CD8-positive, alpha-beta T cell (primary cell): ENCODE measurements at regions of chr2 and their contacts with region 1.

Region 1: DNA sequence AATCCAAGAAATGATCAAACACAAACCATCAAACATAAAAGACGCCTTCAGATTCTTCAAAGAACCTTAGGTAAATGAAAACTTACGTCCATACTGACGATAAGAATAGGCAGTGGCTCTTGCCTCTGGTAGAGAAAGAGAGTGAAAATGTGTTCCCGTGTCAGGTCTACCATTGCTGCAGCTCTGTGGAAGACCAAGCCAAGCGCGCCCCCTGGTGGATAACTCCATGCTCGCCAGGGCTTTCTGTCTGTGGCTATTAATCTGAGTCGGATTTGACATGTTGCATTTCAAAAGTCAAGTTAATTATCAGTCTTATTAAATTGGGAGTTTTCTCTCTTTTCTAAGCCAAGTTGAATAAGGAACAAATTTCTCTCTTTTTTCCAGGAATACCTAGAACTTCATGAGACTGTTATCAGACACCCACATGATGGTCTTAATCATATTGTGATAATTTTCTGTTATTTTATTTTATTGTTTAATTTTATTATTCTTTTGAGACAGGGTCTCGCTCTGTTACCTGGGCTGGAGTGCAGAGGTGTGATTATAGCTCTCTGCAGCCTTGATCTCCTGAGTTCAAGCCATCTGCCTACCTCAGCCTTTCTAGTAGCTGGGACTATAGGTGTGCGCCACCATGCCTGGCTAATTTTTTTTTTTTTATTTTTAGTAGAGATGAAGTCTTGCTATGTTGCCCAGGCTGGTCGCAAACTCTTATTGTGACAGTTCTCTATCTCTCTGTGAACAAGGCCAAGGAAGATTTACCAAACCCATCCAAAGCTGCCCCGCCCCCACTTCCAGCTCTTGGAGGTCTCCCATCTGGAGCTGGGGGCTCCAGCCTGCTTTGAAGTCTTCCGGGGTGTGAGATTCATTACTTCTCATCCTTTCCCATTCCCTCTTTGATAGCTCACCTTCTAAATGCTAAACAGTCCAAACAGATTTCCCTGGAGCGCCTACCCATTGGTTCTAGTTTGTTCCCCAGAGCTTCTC is 15.8 kb upstream of the ZAP70 start:
- DNase-seq: peak; percentile 86 to 98 (median 90)
- ATAC-seq: peak; percentile 92
- H3K4me3 ChIP-seq: no peak overlapping the region
- H3K4me3 Mint-ChIP-seq: peak overlapping the region; percentile 9
- H3K27ac ChIP-seq: no peak overlapping the region
- H3K27ac Mint-ChIP-seq: no peak overlapping the region
- H3K4me1 ChIP-seq: no peaks in the 10 kb centered on the region
- H3K4me1 Mint-ChIP-seq: peaks cover 7% of the 10 kb centered on the region
- H3K27me3 ChIP-seq: no peaks in the 10 kb centered on the region
- H3K27me3 Mint-ChIP-seq: no peaks in the 10 kb centered on the region
- CTCF ChIP-seq: peak; percentile 85

Region 2: DNA sequence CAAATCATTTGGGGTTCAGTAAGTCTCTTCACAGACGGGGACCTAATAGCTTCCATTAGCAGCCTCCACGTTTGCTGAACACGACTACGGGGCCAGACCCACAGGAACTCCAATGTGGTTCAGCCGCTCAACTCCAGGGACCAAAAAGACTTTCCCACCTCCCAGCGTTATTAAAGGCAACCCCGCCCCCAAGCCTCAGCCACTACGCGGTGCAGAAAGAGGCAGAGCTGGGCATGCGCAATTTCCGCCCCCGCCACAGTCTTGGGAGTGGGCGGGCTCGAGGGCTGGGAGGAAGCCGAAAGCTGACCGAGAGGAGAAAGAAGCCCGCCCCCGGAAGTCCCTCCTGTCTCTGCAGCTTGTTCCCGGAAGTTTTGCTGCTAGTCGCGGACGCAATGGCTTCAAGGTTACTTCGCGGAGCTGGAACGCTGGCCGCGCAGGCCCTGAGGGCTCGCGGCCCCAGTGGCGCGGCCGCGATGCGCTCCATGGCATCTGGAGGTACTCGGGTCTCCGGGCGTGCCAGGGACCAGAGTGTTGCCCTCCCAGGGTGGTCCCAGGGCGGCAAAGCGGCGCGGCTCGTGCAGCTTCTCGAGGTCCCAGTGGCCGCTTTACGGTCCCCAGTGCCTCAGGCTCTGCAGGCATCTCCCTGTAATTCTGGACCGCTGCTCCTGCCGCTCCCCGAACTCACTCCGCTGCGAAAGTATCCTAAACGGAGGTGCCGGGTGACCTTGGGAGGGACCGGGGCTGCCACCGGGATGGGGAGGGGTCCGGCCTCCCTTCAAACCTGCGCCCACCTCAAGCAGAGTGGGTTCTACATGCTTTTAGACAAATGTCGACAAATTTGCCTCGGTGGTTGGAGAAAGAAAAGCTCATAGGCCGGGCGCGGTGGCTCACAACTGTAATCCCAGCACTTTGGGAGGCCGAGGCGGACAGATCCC is 51.6 kb before region 1 on chr2 and contains the start of gene COX5B:
- CTCF ChIA-PET with region 1: interaction called, 8 read pairs
- POLR2A ChIA-PET with region 1: interaction called, 12 read pairs
- intact Hi-C with region 1: loop called (anchors 2 to 5 kb)
- DNase-seq: peak; percentile 97 to 99 (median 99)
- ATAC-seq: peak; percentile 97
- H3K4me3 ChIP-seq: peak within 1 kb of the TSS; percentile 94 to 97
- H3K4me3 Mint-ChIP-seq: peak within 1 kb of the TSS; percentile 91
- H3K27ac ChIP-seq: peak within 1 kb of the TSS; percentile 83 to 90
- H3K27ac Mint-ChIP-seq: peak within 1 kb of the TSS; percentile 95
- H3K4me1 ChIP-seq: peaks cover 20% of the 10 kb centered on the region
- H3K4me1 Mint-ChIP-seq: peaks cover 20% of the 10 kb centered on the region
- H3K27me3 ChIP-seq: no peaks in the 10 kb centered on the region
- H3K27me3 Mint-ChIP-seq: no peaks in the 10 kb centered on the region
- CTCF ChIP-seq: no peak
- total RNA-seq, gene COX5B: 115 to 117 TPM

Region 3: GRCh38 chr2:97675430-97676113 is 22.0 kb before region 1 on chr2:
- CTCF ChIA-PET with region 1: interaction called, 14 read pairs
- POLR2A ChIA-PET with region 1: interaction called, 4 read pairs
- intact Hi-C with region 1: no loop called
- DNase-seq: no peak
- ATAC-seq: no peak
- H3K4me3 ChIP-seq: no peak overlapping the region
- H3K4me3 Mint-ChIP-seq: no peak overlapping the region
- H3K27ac ChIP-seq: no peak overlapping the region
- H3K27ac Mint-ChIP-seq: no peak overlapping the region
- H3K4me1 ChIP-seq: no peaks in the 10 kb centered on the region
- H3K4me1 Mint-ChIP-seq: no peaks in the 10 kb centered on the region
- H3K27me3 ChIP-seq: no peaks in the 10 kb centered on the region
- H3K27me3 Mint-ChIP-seq: peaks cover 14% of the 10 kb centered on the region
- CTCF ChIP-seq: no peak

Region 4: DNA sequence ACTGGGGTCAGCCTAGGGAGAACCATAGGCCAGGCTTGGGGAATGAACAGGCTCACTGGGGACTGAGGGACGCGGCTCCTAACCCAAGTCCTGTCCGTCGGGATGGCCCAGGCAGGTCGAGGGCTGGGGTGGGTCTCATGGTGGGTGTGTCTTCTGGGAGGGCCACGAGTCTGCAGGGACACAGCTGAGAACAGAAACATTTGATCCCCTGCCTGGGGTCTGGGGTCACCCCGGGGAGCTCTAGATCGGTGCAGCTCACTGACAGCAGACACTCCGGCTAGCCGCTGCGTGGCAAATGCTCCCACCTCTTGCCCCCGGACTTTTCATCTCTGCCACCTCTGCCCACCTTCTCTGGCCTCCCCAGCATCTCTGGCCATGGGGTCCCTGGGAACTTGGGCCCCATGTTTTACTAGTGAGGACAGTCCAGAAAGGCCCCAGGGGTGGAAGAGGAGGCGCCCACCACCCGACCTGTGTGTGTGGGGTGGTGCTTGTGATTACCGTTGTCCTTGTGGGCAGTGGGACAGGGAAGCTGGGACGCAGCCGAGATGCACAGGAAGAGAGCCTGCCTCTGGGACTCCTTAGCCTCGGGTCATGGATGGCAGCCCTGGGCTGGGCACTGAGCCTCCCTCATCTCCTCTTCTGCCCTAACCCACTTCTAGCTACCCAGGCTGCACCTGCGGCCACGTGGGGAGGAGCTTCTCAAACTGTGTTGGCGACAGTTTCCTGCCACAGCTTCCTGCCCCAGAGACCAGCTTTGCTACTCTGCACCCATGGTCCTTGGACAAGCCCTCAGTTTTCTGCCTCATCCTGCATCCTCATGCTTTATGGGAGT is 20.7 kb after region 1 on chr2:
- CTCF ChIA-PET with region 1: interaction called, 185 read pairs
- POLR2A ChIA-PET with region 1: interaction called, 4 read pairs
- intact Hi-C with region 1: no loop called
- DNase-seq: peak; percentile 58 to 90 (median 80)
- ATAC-seq: peak; percentile 76
- H3K4me3 ChIP-seq: peak overlapping the region; percentile 68 to 91
- H3K4me3 Mint-ChIP-seq: peak overlapping the region; percentile 96
- H3K27ac ChIP-seq: peak overlapping the region; percentile 80 to 88
- H3K27ac Mint-ChIP-seq: peak overlapping the region; percentile 97
- H3K4me1 ChIP-seq: peaks cover 80% of the 10 kb centered on the region
- H3K4me1 Mint-ChIP-seq: peaks cover 85% of the 10 kb centered on the region
- H3K27me3 ChIP-seq: no peaks in the 10 kb centered on the region
- H3K27me3 Mint-ChIP-seq: no peaks in the 10 kb centered on the region
- CTCF ChIP-seq: no peak

Region 5: GRCh38 chr2:97740590-97741182 is 43.1 kb after region 1 on chr2:
- CTCF ChIA-PET with region 1: interaction called, 181 read pairs
- POLR2A ChIA-PET with region 1: interaction called, 4 read pairs
- intact Hi-C with region 1: no loop called
- DNase-seq: peak in 4 of 9 experiments; percentile 37 to 70 (median 54)
- ATAC-seq: peak; percentile 55
- H3K4me3 ChIP-seq: no peak overlapping the region
- H3K4me3 Mint-ChIP-seq: no peak overlapping the region
- H3K27ac ChIP-seq: peak overlapping the region in 1 of 2 experiments; percentile 68
- H3K27ac Mint-ChIP-seq: peak overlapping the region; percentile 77
- H3K4me1 ChIP-seq: peaks cover 36% of the 10 kb centered on the region
- H3K4me1 Mint-ChIP-seq: peaks cover 59% of the 10 kb centered on the region
- H3K27me3 ChIP-seq: no peaks in the 10 kb centered on the region
- H3K27me3 Mint-ChIP-seq: no peaks in the 10 kb centered on the region
- CTCF ChIP-seq: peak; percentile 61

Region 6: DNA sequence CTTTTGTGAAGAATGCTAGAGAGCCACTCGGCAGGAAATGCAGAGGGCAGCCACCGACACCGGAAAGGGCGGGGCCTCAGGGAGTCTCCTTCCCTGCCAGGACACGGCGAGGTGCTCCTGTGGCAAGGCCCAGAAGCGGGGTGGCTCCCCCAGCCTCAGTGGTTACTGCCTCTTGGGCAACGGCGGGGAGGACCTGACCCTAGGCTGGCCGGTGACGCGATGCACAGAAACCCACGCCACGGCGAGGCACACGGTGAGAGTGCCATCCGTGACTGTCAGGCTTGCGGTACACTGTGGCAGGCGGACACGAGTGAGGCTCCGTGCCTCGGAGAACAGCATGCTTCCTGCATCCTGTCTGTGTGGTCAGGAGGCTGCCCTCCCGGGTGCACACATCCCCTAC is 63.6 kb after region 1 on chr2:
- CTCF ChIA-PET with region 1: interaction called, 24 read pairs
- POLR2A ChIA-PET with region 1: no interaction called
- intact Hi-C with region 1: no loop called
- DNase-seq: peak; percentile 15 to 79 (median 57)
- ATAC-seq: peak; percentile 69
- H3K4me3 ChIP-seq: peak overlapping the region in 1 of 2 experiments; percentile 18
- H3K4me3 Mint-ChIP-seq: peak overlapping the region; percentile 61
- H3K27ac ChIP-seq: peak overlapping the region; percentile 32 to 40
- H3K27ac Mint-ChIP-seq: peak overlapping the region; percentile 91
- H3K4me1 ChIP-seq: peaks cover 42% of the 10 kb centered on the region
- H3K4me1 Mint-ChIP-seq: peaks cover 29% of the 10 kb centered on the region
- H3K27me3 ChIP-seq: no peaks in the 10 kb centered on the region
- H3K27me3 Mint-ChIP-seq: no peaks in the 10 kb centered on the region
- CTCF ChIP-seq: no peak

Region 7: GRCh38 chr2:97834610-97835009 is 137.1 kb after region 1 on chr2:
- CTCF ChIA-PET with region 1: no interaction called
- POLR2A ChIA-PET with region 1: no interaction called
- intact Hi-C with region 1: no loop called
- DNase-seq: no peak
- ATAC-seq: no peak
- H3K4me3 ChIP-seq: no peak overlapping the region
- H3K4me3 Mint-ChIP-seq: no peak overlapping the region
- H3K27ac ChIP-seq: no peak overlapping the region
- H3K27ac Mint-ChIP-seq: peak overlapping the region; percentile 43
- H3K4me1 ChIP-seq: no peaks in the 10 kb centered on the region
- H3K4me1 Mint-ChIP-seq: peaks cover 7% of the 10 kb centered on the region
- H3K27me3 ChIP-seq: no peaks in the 10 kb centered on the region
- H3K27me3 Mint-ChIP-seq: no peaks in the 10 kb centered on the region
- CTCF ChIP-seq: no peak